ENCODE measurements at regions of chr4 and their contacts with region 1.

Region 1: GRCh38 chr4:81052119-81053068 is 21.9 kb downstream of the BMP3 start:
- DNase-seq: peak; percentile 58 to 65
- H3K4me3 ChIP-seq: no peak overlapping the region
- H3K4me3 Mint-ChIP-seq: no peak overlapping the region
- H3K27ac Mint-ChIP-seq: no peak overlapping the region
- H3K4me1 ChIP-seq: no peaks in the 10 kb centered on the region
- H3K4me1 Mint-ChIP-seq: no peaks in the 10 kb centered on the region
- H3K27me3 ChIP-seq: no peaks in the 10 kb centered on the region
- H3K27me3 Mint-ChIP-seq: peaks cover 8% of the 10 kb centered on the region
- CTCF ChIP-seq: peak; percentile 68 to 71

Region 2: DNA sequence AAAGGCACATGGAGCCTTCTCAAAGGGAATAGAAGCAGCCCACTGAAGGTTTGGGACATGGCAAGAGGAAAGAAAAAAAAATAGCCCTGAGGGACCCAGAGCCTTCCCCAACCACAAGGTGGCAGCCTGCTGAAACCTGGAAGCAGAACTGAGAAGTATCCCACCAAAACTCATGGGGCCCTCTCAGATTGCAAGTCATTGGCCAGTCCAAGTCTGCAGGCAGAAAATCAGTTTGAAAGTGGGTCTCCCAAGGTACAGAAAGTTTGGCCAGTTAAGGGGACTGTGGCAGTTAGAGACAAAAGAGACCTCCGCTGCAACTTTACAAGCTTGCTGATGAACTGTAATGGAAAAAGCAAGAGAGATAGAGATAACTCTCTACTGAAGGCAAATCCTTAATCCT is 1135.1 kb before region 1 on chr4:
- CTCF ChIA-PET with region 1: no interaction called
- POLR2A ChIA-PET with region 1: no interaction called
- intact Hi-C with region 1: loop called (anchors 10 kb)
- DNase-seq: peak; percentile 50 to 56
- H3K4me3 ChIP-seq: no peak overlapping the region
- H3K4me3 Mint-ChIP-seq: no peak overlapping the region
- H3K27ac Mint-ChIP-seq: no peak overlapping the region
- H3K4me1 ChIP-seq: no peaks in the 10 kb centered on the region
- H3K4me1 Mint-ChIP-seq: no peaks in the 10 kb centered on the region
- H3K27me3 ChIP-seq: no peaks in the 10 kb centered on the region
- H3K27me3 Mint-ChIP-seq: no peaks in the 10 kb centered on the region
- CTCF ChIP-seq: peak; percentile 64 to 75

Region 3: GRCh38 chr4:80202190-80202711 is 850.1 kb before region 1 on chr4:
- CTCF ChIA-PET with region 1: no interaction called
- POLR2A ChIA-PET with region 1: no interaction called
- intact Hi-C with region 1: loop called (anchors 1 kb)
- DNase-seq: peak; percentile 64 to 84
- H3K4me3 ChIP-seq: peak overlapping the region; percentile 35
- H3K4me3 Mint-ChIP-seq: peak overlapping the region; percentile 67
- H3K27ac Mint-ChIP-seq: no peak overlapping the region
- H3K4me1 ChIP-seq: no peaks in the 10 kb centered on the region
- H3K4me1 Mint-ChIP-seq: peaks cover 8% of the 10 kb centered on the region
- H3K27me3 ChIP-seq: peaks cover 1% of the 10 kb centered on the region
- H3K27me3 Mint-ChIP-seq: peaks cover 30% of the 10 kb centered on the region
- CTCF ChIP-seq: peak; percentile 67 to 74

Region 4: GRCh38 chr4:80221161-80221560 is 831.2 kb before region 1 on chr4:
- CTCF ChIA-PET with region 1: no interaction called
- POLR2A ChIA-PET with region 1: no interaction called
- intact Hi-C with region 1: loop called (anchors 5 kb)
- DNase-seq: no peak
- H3K4me3 ChIP-seq: no peak overlapping the region
- H3K4me3 Mint-ChIP-seq: no peak overlapping the region
- H3K27ac Mint-ChIP-seq: no peak overlapping the region
- H3K4me1 ChIP-seq: no peaks in the 10 kb centered on the region
- H3K4me1 Mint-ChIP-seq: no peaks in the 10 kb centered on the region
- H3K27me3 ChIP-seq: no peaks in the 10 kb centered on the region
- H3K27me3 Mint-ChIP-seq: peaks cover 3% of the 10 kb centered on the region
- CTCF ChIP-seq: peak; percentile 9 to 11

Measured in Caco-2 (cell line).